ENCODE measurements at regions of chr9 and their contacts with region 1.

Region 1: GRCh38 chr9:121463026-121463807 is 36.4 kb downstream of the GGTA1 start:
- DNase-seq: peak; percentile 84

Region 2: DNA sequence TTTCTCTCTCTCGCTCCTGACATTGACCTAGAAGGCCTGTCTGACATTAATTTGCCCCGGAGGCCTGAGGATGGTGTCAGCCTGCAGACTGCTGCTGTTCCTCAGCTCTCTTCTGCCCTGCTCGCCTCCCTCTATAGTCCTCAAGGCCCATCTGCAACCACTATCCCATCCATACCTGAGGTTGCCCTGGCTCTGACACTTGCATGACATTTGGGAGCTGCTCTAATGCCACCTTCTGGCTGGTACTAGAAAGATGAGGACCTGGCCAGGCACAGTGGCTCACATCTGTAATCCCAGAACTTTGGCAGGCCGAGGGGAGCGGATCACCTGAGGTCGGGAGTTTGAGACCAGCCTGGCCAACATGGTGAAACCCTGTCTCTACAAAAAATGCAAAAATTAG is 75.0 kb after region 1 on chr9:
- intact Hi-C with region 1: loop called (anchors 2 kb)
- DNase-seq: no peak